Right cardiac atrium (tissue), 5 donors: ENCODE measurements at regions of chr9 and their contacts with region 1.

Region 1: GRCh38 chr9:125746017-125746773 is 978 bp upstream of the PBX3 start:
- DNase-seq: peak; percentile 96 to 98 (median 98)
- ATAC-seq: peak; percentile 97
- H3K4me3 ChIP-seq: peak overlapping the region; percentile 82
- H3K27ac ChIP-seq: peak overlapping the region; percentile 88
- H3K4me1 ChIP-seq: no peaks in the 10 kb centered on the region
- H3K27me3 ChIP-seq: no peaks in the 10 kb centered on the region

Region 2: GRCh38 chr9:125650271-125650737 is 95.9 kb before region 1 on chr9:
- intact Hi-C with region 1: no loop called
- DNase-seq: no peak
- ATAC-seq: peak in 1 of 2 donors; percentile 45
- H3K4me3 ChIP-seq: no peak overlapping the region
- H3K27ac ChIP-seq: no peak overlapping the region
- H3K4me1 ChIP-seq: peaks cover 2% of the 10 kb centered on the region
- H3K27me3 ChIP-seq: no peaks in the 10 kb centered on the region

Region 3: GRCh38 chr9:125820100-125820804 is 74.1 kb after region 1 on chr9:
- intact Hi-C with region 1: loop called in 2 of 4 experiments (anchors 5 to 10 kb)
- DNase-seq: no peak
- ATAC-seq: peak; percentile 73 to 85
- H3K4me3 ChIP-seq: peak overlapping the region; percentile 7
- H3K27ac ChIP-seq: peak overlapping the region; percentile 15
- H3K4me1 ChIP-seq: no peaks in the 10 kb centered on the region
- H3K27me3 ChIP-seq: no peaks in the 10 kb centered on the region

Region 4: DNA sequence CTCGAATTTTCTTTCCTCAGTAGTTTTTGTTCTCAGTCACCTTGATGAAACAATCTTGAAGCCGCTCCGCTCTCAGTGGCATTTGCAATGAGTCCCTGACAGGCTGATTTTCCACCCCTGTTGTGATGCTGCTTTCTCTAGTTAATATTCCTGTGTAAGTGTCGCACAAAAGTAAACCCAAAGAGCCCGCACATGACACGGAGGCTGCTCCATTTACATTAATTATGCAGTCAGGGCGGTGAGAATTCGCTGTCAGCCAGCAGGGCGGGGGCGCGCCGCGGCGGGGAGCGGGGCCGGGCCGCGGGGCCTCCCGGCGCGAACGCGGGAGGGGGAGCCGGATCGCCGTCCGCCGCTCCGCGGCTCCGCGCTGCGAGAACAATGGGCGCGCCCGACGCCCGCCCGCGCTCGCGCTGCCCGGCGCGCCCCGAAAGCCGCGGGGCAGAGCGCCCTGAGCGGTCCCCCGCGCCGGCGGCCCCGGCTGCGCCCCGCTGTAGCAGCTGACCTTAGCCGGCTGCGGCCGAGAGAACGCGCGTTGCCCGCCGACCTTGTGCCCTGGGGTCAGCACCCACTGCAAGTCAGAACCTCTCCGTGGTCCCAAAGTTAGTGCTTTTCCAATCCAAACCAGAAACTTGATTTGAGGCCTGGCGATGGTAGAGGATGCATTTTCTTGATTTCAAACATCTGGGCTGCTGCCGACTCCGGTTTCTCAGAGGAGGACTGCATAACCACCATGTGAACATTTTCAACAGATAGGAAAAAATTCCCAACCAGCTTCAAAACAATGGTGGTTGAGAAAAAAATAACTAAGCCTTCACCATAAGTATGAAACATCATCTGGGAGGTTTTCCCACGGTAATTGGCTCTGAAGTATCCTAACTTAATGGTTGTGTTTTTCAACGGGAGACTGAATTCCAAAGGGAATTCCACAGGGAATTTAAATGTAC is 143.6 kb after region 1 on chr9:
- intact Hi-C with region 1: loop called in 2 of 4 experiments (anchors 5 to 10 kb)
- DNase-seq: peak; percentile 28 to 77 (median 73)
- ATAC-seq: peak; percentile 71 to 85
- H3K4me3 ChIP-seq: peak overlapping the region; percentile 66
- H3K27ac ChIP-seq: peak overlapping the region; percentile 63
- H3K4me1 ChIP-seq: no peaks in the 10 kb centered on the region
- H3K27me3 ChIP-seq: no peaks in the 10 kb centered on the region

Region 5: GRCh38 chr9:126611592-126612325 is 865.6 kb after region 1 on chr9:
- intact Hi-C with region 1: no loop called
- DNase-seq: peak; percentile 82 to 94 (median 93)
- ATAC-seq: peak; percentile 71 to 80
- H3K4me3 ChIP-seq: no peak overlapping the region
- H3K27ac ChIP-seq: no peak overlapping the region
- H3K4me1 ChIP-seq: no peaks in the 10 kb centered on the region
- H3K27me3 ChIP-seq: no peaks in the 10 kb centered on the region